WTC11 (cell line): ENCODE measurements at regions of chr11 and their contacts with region 1.

Region 1: DNA sequence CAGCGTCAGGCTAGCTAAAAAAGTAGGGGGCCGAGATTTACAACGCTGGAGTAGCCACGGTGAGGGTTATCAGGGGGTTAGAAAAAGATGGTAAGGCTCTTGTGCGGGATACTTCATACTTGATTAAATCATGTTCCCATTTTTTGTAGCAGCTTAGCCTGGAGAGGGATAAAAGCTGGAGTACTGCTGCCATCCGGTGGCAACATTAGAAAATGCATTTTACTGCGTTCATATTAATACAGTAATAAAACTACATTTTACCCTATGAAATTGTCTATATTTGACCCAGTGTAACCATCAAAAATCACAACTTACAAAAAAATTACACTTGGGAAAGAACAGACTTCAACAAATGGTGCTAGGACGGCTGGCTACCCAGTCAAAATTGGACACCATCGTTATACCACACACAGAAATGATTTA is 17.3 kb downstream of the RPUSD4 start:
- DNase-seq: peak; percentile 35
- ATAC-seq: peak; percentile 58
- H3K4me3 Mint-ChIP-seq: no peak overlapping the region
- H3K27ac Mint-ChIP-seq: no peak overlapping the region
- H3K4me1 Mint-ChIP-seq: no peaks in the 10 kb centered on the region
- H3K27me3 Mint-ChIP-seq: no peaks in the 10 kb centered on the region
- CTCF ChIP-seq: peak; percentile 38

Region 2: GRCh38 chr11:125923012-125923579 is 271.0 kb before region 1 on chr11:
- CTCF ChIA-PET with region 1: interaction called, 22 read pairs
- POLR2A ChIA-PET with region 1: no interaction called
- DNase-seq: peak; percentile 71
- ATAC-seq: peak; percentile 85
- H3K4me3 Mint-ChIP-seq: no peak overlapping the region
- H3K27ac Mint-ChIP-seq: no peak overlapping the region
- H3K4me1 Mint-ChIP-seq: peaks cover 8% of the 10 kb centered on the region; the same call in 1 of the 2 replicates
- H3K27me3 Mint-ChIP-seq: no peaks in the 10 kb centered on the region
- CTCF ChIP-seq: peak; percentile 44; the same call in 1 of the 2 replicates